ENCODE measurements at regions of chr16 and their contacts with region 1.

Region 1: DNA sequence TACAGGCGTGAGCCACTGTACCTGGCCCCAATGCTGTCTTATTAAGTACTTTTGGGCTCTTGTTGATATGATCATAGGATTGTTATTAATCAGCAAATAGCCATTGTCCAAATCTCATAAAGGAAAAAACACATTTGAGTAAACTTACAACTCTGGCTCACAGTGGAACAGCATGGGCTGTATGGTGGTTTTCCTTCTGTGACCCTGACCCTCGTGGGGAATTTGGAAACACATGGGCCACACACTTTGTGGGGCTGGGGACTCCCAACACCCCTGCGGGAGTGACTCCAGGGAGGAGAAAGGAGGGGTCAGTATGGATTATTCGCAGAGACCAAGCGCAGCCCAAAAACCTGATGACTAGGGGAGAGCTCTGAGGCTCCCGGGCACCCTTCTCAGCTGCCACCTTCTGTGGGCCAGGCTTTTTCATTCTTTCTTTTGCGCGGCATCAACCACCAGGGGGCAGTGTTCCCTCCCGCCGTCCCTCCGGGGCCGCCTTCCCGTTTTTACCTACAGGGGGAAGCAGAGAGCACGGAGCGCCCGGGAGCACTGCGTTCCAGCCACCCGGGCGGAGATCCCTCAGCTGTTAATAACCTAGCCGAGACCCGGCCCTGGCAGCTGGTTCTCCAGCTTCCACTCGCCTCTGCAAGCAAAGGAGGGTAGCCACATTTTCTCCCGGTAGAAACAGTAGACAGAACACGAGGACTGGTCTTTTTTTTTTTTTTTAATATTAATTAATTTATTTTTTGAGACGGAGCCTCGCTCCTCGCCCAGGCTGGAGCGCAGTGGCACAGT is 9.7 kb downstream of the TSNAXIP1 start:
- DNase-seq: peak; percentile 85
- H3K4me3 Mint-ChIP-seq: peak overlapping the region; percentile 45
- H3K27ac Mint-ChIP-seq: no peak overlapping the region
- H3K4me1 Mint-ChIP-seq: peaks cover 3% of the 10 kb centered on the region
- H3K27me3 Mint-ChIP-seq: peaks cover 3% of the 10 kb centered on the region

Region 2: GRCh38 chr16:67805718-67806427 is 10.6 kb before region 1 on chr16:
- intact Hi-C with region 1: no loop called
- DNase-seq: no peak
- H3K4me3 Mint-ChIP-seq: peak overlapping the region; percentile 95
- H3K27ac Mint-ChIP-seq: peak overlapping the region; percentile 76
- H3K4me1 Mint-ChIP-seq: peaks cover 39% of the 10 kb centered on the region
- H3K27me3 Mint-ChIP-seq: no peaks in the 10 kb centered on the region

Region 3: DNA sequence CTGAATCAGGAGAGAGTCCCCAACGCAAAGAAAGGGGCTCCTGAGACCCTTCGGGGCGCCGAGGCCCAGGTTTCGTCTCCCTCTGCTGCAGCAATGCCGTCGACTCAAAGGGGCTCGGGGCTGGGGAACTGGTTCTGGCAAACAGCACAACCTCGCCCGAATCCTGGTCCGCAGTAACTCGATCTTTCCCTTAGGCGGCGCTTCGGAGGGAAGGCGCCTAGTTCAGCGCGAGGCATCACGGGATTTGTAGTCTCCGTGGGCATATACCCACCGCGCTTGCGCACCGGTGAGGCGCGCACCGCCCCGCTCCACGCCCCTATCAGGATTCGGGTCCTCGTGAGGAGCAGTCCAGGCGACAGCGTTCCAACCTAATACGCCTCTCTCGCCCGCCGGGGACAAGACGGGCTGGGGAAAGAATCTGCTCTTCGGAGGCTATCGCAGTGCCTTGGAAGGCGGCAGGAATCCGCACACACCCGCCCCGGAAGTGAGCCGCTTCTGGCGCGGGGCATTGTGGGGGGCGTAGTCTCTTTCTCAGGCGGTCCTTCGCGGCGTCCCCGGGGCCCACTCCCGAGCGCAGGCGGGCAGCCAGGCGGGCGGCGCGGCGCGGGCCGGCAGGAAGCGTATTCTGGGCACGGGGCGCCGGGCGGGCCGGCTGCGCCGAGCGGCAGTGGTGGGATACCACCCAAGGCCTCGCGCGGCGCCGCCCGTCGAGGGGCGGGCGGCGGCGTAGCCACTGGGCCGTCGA is 25.5 kb after region 1 on chr16 and contains the start of gene THAP11:
- intact Hi-C with region 1: loop called (anchors 1 kb)
- DNase-seq: peak; percentile 92
- H3K4me3 Mint-ChIP-seq: peak within 1 kb of the TSS; percentile 89
- H3K27ac Mint-ChIP-seq: peak within 1 kb of the TSS; percentile 94
- H3K4me1 Mint-ChIP-seq: peaks cover 29% of the 10 kb centered on the region
- H3K27me3 Mint-ChIP-seq: no peaks in the 10 kb centered on the region
- total RNA-seq, gene THAP11: 43.0 and 45.1 TPM in 2 replicates

Region 4: DNA sequence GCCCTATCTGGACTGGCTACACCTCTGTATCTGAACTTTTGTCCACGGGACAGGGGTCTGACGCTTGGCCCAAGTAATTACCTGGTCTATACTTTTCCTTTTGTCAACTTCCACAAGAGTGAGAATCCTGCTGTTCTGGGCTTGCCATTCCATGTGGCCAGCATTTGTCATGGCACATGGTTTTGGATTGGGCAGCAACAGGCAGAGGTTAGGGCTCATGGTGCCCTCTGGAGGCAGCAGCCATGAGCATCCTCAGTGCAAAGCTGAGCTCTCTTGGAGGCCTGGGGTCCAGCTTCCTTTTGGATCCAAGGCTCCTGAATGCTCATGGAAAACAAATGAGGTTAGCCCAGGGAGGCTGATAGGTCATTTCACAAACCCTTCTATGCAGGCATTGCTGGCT is 48.9 kb after region 1 on chr16:
- intact Hi-C with region 1: loop called (anchors 1 kb)
- DNase-seq: no peak
- H3K4me3 Mint-ChIP-seq: no peak overlapping the region
- H3K27ac Mint-ChIP-seq: no peak overlapping the region
- H3K4me1 Mint-ChIP-seq: peaks cover 2% of the 10 kb centered on the region
- H3K27me3 Mint-ChIP-seq: no peaks in the 10 kb centered on the region

Region 5: GRCh38 chr16:67872786-67873537 is 56.5 kb after region 1 on chr16 and contains the start of gene EDC4:
- intact Hi-C with region 1: loop called (anchors 2 kb)
- DNase-seq: peak; percentile 85
- H3K4me3 Mint-ChIP-seq: peak within 1 kb of the TSS; percentile 83
- H3K27ac Mint-ChIP-seq: peak within 1 kb of the TSS; percentile 89
- H3K4me1 Mint-ChIP-seq: peaks cover 21% of the 10 kb centered on the region
- H3K27me3 Mint-ChIP-seq: no peaks in the 10 kb centered on the region
- total RNA-seq, gene EDC4: 102 and 105 TPM in 2 replicates

Region 6: DNA sequence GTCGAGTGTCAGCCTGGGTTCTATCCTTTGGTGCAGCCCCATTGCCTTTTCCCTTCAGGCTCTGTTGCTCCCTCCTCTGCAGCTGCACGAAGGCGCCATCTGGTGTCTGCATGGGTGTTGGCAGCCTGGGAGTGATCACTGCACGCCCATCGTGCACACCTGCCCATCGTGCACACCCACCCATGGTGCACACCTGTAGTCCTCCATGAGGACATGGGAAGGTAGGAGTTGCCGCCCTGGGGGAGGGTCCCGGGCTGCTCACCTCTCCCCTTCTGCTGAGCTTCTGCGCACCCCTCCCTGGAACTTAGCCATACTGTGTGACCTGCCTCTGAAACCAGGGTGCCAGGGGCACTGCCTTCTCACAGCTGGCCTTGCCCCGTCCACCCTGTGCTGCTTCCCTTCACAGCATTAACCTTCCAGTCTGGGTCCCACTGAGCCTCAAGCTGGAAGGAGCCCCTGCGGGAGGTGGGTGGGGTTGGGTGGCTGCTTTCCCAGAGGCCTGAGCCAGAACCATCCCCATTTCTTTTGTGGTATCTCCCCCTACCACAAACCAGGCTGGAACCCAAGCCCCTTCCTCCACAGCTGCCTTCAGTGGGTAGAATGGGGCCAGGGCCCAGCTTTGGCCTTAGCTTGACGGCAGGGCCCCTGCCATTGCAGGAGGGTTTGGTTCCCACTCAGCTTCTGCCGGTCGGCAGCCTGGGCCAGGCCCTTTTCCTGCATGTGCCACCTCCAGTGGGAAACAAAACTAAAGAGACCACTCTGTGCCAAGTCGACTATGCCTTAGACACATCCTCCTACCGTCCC is 112.3 kb after region 1 on chr16:
- intact Hi-C with region 1: loop called (anchors 5 kb)
- DNase-seq: peak; percentile 68
- H3K4me3 Mint-ChIP-seq: no peak overlapping the region
- H3K27ac Mint-ChIP-seq: no peak overlapping the region
- H3K4me1 Mint-ChIP-seq: peaks cover under 1% of the 10 kb centered on the region
- H3K27me3 Mint-ChIP-seq: no peaks in the 10 kb centered on the region

Region 7: DNA sequence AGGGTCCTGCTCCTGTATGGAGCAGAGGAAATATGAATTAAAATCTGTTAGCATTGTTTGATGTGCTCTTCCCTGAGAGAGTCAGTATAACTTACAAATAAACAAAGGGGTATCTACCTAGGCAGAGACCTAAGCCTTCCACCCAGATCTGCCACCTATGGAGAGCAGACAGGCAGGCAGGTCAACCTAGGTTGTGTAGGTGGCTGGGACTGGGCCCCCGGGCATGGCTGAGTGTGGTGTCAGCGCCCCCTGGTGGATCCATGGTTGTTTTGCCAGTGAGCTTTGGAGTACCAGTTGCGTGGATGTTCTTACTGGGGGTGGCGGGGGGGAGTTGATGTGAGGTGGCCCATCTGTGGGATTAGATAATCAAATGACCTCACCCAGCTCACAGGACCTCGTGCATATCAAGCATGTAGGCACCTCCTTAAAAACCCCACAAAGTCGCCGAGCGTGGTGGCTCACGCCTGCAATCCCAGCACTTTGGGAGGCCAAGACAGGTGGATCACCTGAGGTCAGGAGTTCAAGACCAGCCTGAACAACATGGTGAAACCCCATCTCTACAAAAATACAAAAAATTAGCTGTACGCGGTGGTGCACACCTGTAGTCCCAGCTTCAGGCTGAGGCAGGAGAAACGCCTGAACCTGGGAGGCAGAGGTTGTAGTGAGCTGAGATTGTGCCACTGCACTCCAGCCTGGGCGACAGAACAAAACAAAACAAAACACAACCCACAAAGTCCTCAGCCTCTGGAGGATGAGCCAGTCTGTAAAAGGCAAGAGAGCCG is 224.3 kb after region 1 on chr16:
- intact Hi-C with region 1: loop called (anchors 1 kb)
- DNase-seq: peak; percentile 82
- H3K4me3 Mint-ChIP-seq: no peak overlapping the region
- H3K27ac Mint-ChIP-seq: peak overlapping the region; percentile 39
- H3K4me1 Mint-ChIP-seq: peaks cover 11% of the 10 kb centered on the region
- H3K27me3 Mint-ChIP-seq: no peaks in the 10 kb centered on the region

Measured in activated T-helper 2 cell treated with anti-CD3 and anti-CD28 coated beads, Interferon-gamma antibody, Interleukin-2, Interleukin-4, amounts not matched to agents 10 μg/mL and 5 μg/mL and 100 μg/mL, durations not matched to agents 14 hours and 24 hours and 36 hours (primary cell).